ENCODE measurements at regions of chr14 and their contacts with region 1.

Region 1: GRCh38 chr14:76956316-76957090 is 72.0 kb downstream of the IRF2BPL start:
- DNase-seq: peak; percentile 96
- H3K4me3 Mint-ChIP-seq: peak overlapping the region; percentile 82
- H3K27ac Mint-ChIP-seq: peak overlapping the region; percentile 97
- H3K4me1 Mint-ChIP-seq: peaks cover 71% of the 10 kb centered on the region
- H3K27me3 Mint-ChIP-seq: no peaks in the 10 kb centered on the region

Region 2: GRCh38 chr14:76151398-76152339 is 804.8 kb before region 1 on chr14 and contains the start of gene GPATCH2L:
- intact Hi-C with region 1: loop called (anchors 2 kb)
- DNase-seq: peak; percentile 99
- H3K4me3 Mint-ChIP-seq: peak within 1 kb of the TSS; percentile 88
- H3K27ac Mint-ChIP-seq: peak within 1 kb of the TSS; percentile 99
- H3K4me1 Mint-ChIP-seq: peaks cover 44% of the 10 kb centered on the region
- H3K27me3 Mint-ChIP-seq: peaks cover 5% of the 10 kb centered on the region
- total RNA-seq, gene GPATCH2L: 60.6 and 61.6 TPM in 2 replicates

Region 3: GRCh38 chr14:76784266-76785264 is 171.9 kb before region 1 on chr14:
- intact Hi-C with region 1: no loop called
- DNase-seq: peak; percentile 88
- H3K4me3 Mint-ChIP-seq: no peak overlapping the region
- H3K27ac Mint-ChIP-seq: peak overlapping the region; percentile 20
- H3K4me1 Mint-ChIP-seq: peaks cover 38% of the 10 kb centered on the region
- H3K27me3 Mint-ChIP-seq: no peaks in the 10 kb centered on the region

Region 4: GRCh38 chr14:76917158-76917596 is 39.3 kb before region 1 on chr14:
- intact Hi-C with region 1: loop called (anchors 2 kb)
- DNase-seq: no peak
- H3K4me3 Mint-ChIP-seq: no peak overlapping the region
- H3K27ac Mint-ChIP-seq: no peak overlapping the region
- H3K4me1 Mint-ChIP-seq: peaks cover 41% of the 10 kb centered on the region
- H3K27me3 Mint-ChIP-seq: no peaks in the 10 kb centered on the region

Region 5: DNA sequence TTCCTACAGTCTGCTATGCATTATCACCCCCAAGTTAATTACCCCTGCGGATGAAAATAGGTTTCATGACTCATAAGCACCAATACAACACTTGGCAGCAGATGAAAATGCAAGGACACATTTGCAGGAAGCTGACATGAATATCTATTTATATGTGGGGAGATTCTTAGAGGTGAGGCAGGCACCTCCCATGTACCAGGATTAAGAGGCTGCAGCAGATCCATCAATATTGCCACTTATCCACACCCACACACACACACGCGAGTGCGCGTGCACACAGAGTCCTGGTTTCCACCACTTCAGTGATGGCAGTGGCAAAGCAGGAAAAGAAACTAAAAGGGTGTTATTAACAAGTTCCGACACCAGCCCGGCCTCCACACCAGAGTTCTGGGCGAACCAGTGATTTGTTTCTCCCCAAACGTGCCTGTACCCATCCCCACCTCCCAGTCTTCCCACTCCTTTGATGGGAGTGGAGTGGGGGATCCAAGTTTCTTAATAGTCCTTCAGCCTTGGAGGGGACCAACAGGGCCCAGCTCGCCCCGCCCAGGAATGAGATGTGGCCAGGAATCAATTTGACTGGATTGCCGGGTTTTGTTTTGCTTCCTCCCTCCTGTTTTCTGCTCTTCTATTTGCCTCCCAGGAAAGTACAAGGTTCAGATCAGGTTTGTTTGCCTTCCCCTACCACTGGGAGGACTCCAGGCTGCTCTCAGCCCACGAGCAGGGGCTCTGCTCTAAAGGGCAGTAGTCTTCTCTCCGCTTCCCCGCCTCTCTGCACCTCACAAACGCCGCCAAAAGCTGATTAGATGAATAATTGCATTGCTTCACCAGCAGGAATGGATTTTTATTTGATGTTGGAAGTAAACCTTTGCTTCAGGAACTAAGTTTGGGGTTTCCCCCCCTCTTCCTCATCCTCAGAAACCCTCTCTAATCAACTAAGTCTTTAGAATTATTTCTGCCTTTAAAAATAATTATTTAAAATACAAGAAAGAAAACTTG is 66.8 kb after region 1 on chr14:
- intact Hi-C with region 1: loop called (anchors 1 kb)
- DNase-seq: peak; percentile 74
- H3K4me3 Mint-ChIP-seq: peak overlapping the region; percentile 74
- H3K27ac Mint-ChIP-seq: peak overlapping the region; percentile 81
- H3K4me1 Mint-ChIP-seq: peaks cover 35% of the 10 kb centered on the region
- H3K27me3 Mint-ChIP-seq: no peaks in the 10 kb centered on the region

Region 6: DNA sequence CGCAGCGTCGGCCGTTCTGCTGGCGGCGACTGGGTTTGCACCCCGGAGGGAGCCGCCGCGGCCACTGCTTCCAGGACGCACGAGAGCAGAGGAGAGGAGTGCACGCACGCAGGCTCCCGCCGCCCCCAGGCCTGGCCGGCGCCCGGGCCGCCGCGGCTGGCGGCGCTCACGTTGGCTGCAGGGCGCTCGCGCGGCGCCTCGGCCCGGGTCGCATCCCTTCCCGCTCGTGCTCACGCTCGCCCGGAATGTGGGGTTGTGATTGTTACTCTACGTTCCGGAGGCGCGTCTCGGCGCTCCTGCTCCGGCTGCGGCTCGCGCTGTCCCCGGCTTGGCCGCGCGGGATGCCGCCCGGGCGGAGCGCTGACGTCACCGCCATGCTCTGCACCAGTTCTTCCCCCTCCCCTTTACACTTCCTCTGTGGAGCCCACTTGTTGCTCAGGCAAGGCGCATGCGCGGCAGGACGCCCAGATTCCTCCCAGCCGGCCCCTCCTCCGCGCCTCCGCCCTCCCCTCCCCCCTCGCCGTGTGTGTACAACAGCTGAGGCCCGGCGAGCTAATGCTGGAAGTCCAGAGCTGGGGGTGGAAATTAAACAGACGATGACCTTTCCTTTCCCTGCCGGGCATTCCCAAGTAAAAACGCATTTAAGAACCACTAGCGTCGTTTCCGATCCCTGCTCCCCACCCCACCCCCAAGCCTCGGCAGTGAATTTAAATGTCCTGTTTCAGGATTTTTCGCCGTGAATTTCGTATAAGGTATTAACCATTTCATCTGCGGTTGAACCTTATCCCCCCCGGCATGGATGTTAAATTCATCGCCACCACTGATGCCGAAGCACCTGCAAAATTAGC is 72.1 kb after region 1 on chr14 and contains the start of gene IRF2BPL:
- intact Hi-C with region 1: loop called (anchors 1 kb)
- DNase-seq: peak; percentile 98
- H3K4me3 Mint-ChIP-seq: peak within 1 kb of the TSS; percentile 99
- H3K27ac Mint-ChIP-seq: peak within 1 kb of the TSS; percentile 98
- H3K4me1 Mint-ChIP-seq: peaks cover 46% of the 10 kb centered on the region
- H3K27me3 Mint-ChIP-seq: no peaks in the 10 kb centered on the region
- total RNA-seq, gene IRF2BPL: 32.8 and 34.8 TPM in 2 replicates

Region 7: DNA sequence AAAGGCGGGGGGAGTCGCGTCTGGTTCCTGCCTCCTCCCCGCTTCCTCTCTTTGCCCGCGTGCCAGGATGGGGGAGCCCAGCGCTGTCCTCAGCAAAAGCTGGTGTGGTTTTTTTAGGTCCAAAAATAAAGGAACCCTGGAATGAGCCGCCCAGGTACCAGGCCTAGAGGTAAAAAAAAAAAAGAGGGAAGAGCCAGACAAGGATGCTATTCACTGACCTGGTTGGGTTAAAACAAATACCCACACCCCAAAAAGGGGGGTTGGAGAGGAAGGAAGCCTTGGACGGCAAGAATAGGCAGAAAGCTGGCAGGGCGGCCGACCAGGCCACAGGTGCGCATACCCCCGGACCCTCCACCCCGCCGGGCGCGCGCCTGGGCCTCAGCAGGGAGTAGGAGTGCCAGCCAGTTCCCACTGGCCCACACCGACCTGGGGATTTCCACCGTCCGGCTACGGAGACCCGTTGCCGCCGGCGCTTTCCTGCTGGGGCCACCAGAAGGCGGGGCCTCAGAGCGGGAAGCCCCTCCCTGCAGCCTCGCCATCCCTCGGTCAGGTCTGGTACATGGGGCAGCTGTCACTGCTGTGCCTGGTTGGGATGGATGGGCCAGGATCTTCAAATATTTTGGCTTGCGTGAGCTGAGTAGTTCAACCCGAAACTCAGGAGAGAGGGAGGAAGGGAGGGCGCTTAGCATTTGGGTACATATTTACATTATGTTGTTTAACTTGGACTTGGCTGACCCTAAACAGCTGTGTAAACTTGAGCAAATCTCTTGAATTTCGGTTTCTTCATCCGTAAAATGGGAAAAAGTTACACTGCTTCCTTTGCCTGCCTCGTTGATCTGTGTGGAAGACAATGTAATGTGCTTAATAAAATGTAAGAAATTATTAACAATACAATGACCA is 77.4 kb after region 1 on chr14:
- intact Hi-C with region 1: loop called (anchors 1 kb)
- DNase-seq: peak; percentile 94
- H3K4me3 Mint-ChIP-seq: peak overlapping the region; percentile 89
- H3K27ac Mint-ChIP-seq: peak overlapping the region; percentile 99
- H3K4me1 Mint-ChIP-seq: peaks cover 73% of the 10 kb centered on the region
- H3K27me3 Mint-ChIP-seq: no peaks in the 10 kb centered on the region

Region 8: DNA sequence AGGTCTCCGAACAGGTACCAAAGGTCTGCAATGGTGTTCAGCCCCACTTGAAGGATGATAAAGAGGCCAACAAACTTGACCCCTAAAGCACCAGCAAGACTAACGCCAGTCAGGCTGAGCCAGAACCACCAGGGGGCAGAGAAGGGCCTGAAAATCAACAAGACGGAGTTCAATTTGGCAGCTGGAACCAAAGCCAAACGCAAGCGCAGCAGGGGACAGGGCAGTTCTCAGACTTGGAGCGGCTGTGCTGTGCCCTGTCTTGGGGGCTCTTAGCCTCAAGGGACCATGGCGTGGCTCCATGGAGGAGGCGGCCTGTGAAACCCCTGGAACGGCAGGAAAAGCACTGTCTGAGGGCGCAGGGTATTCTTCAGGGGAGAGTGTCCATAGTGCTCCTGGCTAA is 344.6 kb after region 1 on chr14:
- intact Hi-C with region 1: loop called (anchors 1 kb)
- DNase-seq: peak; percentile 88
- H3K4me3 Mint-ChIP-seq: no peak overlapping the region
- H3K27ac Mint-ChIP-seq: no peak overlapping the region
- H3K4me1 Mint-ChIP-seq: peaks cover 22% of the 10 kb centered on the region
- H3K27me3 Mint-ChIP-seq: no peaks in the 10 kb centered on the region

Measured in activated CD4-positive, alpha-beta T cell treated with anti-CD3 and anti-CD28 coated beads, Interleukin-2, amount 10 ng/mL, durations not matched to agents 24 days and 14 days (primary cell).